H1 (cell line): ENCODE measurements at regions of chr9 and their contacts with region 1.

Region 1: DNA sequence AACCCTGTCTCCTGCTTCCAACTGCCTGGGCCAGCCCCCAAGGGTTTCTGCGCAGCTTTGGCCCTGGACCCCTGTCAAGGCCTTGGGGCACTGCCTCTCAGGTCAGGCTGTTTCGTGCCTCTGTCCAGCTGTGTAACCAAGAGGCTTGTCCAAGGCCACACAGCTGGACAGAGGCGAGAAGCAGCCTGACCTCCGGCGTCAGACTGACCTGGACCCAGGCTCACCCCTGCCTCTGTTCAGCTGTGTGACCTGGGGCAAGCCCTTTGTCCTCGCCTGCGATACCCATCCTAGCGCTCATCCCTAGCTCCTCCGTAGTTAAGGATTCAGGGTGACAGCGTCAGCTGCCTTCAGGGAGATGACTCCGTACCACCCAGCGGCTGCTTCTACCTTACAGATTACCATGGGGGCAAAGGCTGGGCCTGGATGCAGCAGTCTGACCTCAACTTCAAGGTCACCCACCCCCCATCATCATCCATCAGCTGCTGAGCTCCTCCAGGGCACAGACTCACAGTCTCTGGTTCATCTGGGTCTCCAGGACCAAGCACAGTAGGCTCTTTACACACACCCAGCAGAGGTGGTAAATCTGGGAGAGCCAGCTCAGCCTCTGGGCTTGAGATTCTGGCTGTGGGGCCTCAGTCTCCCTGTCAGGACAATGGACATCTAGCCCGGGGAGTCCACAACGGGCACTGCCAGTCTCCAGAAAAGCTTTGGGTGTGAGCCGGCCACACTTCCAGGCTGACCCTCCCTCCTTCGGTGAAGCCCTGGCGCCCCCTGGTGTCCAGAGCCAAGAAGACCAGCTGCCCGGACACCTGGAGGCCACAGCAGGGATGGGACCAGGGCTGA is 7.9 kb downstream of the AK1 start:
- DNase-seq: peak; percentile 59 to 98
- H3K4me3 ChIP-seq: no peak overlapping the region
- H3K27ac ChIP-seq: no peak overlapping the region
- H3K4me1 ChIP-seq: peaks cover 0 to 8% (median 2%) of the 10 kb centered on the region in 4 experiments; a peak in 1 of 7 replicates
- H3K27me3 ChIP-seq: no peaks in the 10 kb centered on the region; a peak in 1 of 7 replicates
- CTCF ChIP-seq: peak in 2 of 3 experiments; percentile 94 to 99; a peak in 3 of 4 replicates
- EP300 ChIP-seq: no peak
- POLR2A ChIP-seq: no peak
- RAD21 ChIP-seq: peak; percentile 96 to 97

Region 2: DNA sequence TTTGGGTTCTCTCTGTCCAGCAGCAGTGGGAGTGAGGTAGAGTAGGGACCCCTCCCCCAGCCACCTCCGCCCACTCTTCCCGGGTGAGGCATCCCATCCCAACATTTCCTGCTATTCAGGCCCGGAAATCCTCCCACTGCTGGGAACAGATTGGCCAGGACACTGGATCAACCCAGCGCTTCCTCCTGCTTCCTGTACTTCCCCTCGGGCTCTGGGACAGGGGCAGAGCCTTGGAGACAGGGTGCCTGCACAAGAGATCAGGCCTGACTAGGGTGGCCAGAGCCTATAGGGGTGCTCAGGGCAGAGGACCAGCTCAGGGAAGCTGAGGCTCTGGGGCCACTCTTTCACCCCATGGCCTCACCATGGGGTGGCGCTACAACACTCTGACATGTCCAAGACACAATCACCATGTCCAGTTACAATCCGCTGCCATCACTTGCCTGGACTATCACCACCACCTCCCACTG is 105.6 kb before region 1 on chr9:
- CTCF ChIA-PET with region 1: interaction called, 16 read pairs
- POLR2A ChIA-PET with region 1: no interaction called
- DNase-seq: peak in 1 of 2 experiments; percentile 85
- H3K4me3 ChIP-seq: 0 out of 8 replicates have a peak overlapping the region, but pooled peaks of 1 of the 4 experiments have one; percentile 0
- H3K27ac ChIP-seq: no peak overlapping the region
- H3K4me1 ChIP-seq: peaks cover 0 to 20% (median 14%) of the 10 kb centered on the region in 4 experiments; a peak in 6 of 7 replicates
- H3K27me3 ChIP-seq: no peaks in the 10 kb centered on the region
- CTCF ChIP-seq: peak; percentile 76 to 89 (median 77)
- EP300 ChIP-seq: no peak
- POLR2A ChIP-seq: no peak
- RAD21 ChIP-seq: peak; percentile 77 to 78

Region 3: GRCh38 chr9:127793093-127793708 is 76.3 kb before region 1 on chr9:
- CTCF ChIA-PET with region 1: interaction called, 28 read pairs
- POLR2A ChIA-PET with region 1: interaction called, 6 read pairs
- DNase-seq: no peak
- H3K4me3 ChIP-seq: no peak overlapping the region
- H3K27ac ChIP-seq: no peak overlapping the region
- H3K4me1 ChIP-seq: no peaks in the 10 kb centered on the region; a peak in 1 of 7 replicates
- H3K27me3 ChIP-seq: no peaks in the 10 kb centered on the region
- CTCF ChIP-seq: no peak
- EP300 ChIP-seq: no peak
- POLR2A ChIP-seq: peak in 1 of 2 experiments; percentile 45; a peak in 2 of 3 replicates
- RAD21 ChIP-seq: no peak

Region 4: DNA sequence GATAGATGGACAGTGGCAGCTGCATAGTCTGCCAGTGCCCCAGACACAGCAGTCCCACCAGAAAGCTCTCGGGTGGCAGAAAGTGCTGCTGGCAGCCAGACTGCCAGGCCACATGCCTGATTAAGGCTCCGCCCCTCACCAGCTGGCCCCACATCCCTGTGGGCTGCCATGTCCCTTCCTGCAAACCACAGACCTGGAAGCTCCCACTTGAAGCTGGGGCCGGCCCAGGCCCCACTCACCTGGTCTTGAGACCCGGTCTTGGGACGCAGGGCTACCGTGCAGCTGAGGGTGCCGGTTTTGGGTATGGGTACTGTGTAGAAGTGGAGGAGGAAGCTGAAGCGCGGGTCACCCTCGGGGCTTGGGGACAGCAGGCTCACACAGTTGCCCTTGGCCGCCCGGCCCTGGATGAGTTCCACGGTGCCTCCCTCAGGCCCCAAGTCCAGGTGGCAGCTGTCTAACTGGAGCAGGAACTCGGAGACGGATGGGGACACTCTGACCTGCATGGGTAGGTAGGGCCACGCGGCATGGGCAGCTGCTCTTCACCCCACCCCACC is 51.6 kb before region 1 on chr9:
- CTCF ChIA-PET with region 1: interaction called, 116 read pairs
- POLR2A ChIA-PET with region 1: interaction called, 4 read pairs
- DNase-seq: no peak
- H3K4me3 ChIP-seq: no peak overlapping the region
- H3K27ac ChIP-seq: no peak overlapping the region
- H3K4me1 ChIP-seq: no peaks in the 10 kb centered on the region
- H3K27me3 ChIP-seq: no peaks in the 10 kb centered on the region
- CTCF ChIP-seq: no peak
- EP300 ChIP-seq: no peak
- POLR2A ChIP-seq: no peak
- RAD21 ChIP-seq: no peak

Region 5: GRCh38 chr9:127844821-127845359 is 24.6 kb before region 1 on chr9:
- CTCF ChIA-PET with region 1: interaction called, 41 read pairs
- POLR2A ChIA-PET with region 1: interaction called, 6 read pairs
- DNase-seq: no peak
- H3K4me3 ChIP-seq: no peak overlapping the region
- H3K27ac ChIP-seq: no peak overlapping the region; the same call in 1 of the 2 replicates
- H3K4me1 ChIP-seq: peaks cover 0 to 8% (median 5%) of the 10 kb centered on the region in 4 experiments; a peak in 6 of 7 replicates
- H3K27me3 ChIP-seq: no peaks in the 10 kb centered on the region; a peak in 1 of 7 replicates
- CTCF ChIP-seq: no peak
- EP300 ChIP-seq: no peak
- POLR2A ChIP-seq: no peak
- RAD21 ChIP-seq: no peak

Region 6: DNA sequence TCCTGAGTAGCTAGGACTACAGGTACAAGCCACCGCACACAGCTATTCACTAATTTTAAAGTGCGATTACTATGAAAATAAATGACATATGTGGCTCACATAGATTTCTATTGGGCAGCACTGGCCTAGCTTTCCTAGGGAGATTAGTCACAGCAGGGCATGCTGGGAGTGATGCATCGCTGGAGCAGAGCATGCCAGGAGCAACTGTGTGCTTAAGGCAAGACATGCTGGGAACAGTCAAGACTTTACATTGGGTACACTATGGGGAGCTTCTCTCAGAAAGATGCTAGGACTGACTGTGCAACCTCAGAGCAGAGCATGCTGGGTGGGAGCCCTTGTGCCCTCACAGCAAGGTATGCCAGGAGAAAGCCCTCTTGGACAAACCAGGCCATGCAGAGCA is 20.5 kb after region 1 on chr9:
- CTCF ChIA-PET with region 1: interaction called, 15 read pairs
- POLR2A ChIA-PET with region 1: interaction called, 11 read pairs
- DNase-seq: no peak
- H3K4me3 ChIP-seq: no peak overlapping the region
- H3K27ac ChIP-seq: no peak overlapping the region
- H3K4me1 ChIP-seq: no peaks in the 10 kb centered on the region
- H3K27me3 ChIP-seq: no peaks in the 10 kb centered on the region
- CTCF ChIP-seq: no peak
- EP300 ChIP-seq: no peak
- POLR2A ChIP-seq: no peak
- RAD21 ChIP-seq: no peak

Region 7: DNA sequence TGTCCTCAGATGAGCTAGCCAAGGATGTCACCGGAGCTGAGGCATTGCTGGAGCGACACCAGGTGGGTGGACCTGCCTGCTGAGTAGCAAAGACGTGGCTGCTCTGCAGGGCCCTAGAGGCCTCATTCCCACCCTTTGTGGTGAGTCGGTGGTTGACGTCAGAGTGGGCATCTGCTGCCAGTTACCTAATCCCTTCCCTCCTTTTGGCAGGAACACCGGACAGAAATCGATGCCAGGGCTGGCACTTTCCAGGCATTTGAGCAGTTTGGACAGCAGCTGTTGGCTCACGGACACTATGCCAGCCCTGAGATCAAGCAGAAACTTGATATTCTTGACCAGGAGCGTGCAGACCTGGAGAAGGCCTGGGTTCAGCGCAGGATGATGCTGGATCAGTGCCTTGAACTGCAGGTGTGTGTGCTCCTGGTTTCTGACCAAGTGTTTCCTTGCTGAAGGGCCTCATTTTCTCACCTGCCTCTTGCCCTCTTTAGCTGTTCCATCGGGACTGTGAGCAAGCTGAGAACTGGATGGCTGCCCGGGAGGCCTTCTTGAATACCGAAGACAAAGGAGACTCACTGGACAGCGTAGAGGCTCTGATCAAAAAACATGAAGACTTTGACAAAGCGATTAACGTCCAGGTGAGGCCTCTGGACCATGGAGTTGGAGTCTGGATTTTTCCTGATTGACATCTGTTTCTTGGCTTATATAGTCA is 738.3 kb after region 1 on chr9:
- CTCF ChIA-PET with region 1: no interaction called
- POLR2A ChIA-PET with region 1: no interaction called
- DNase-seq: no peak
- H3K4me3 ChIP-seq: no peak overlapping the region
- H3K27ac ChIP-seq: no peak overlapping the region
- H3K4me1 ChIP-seq: no peaks in the 10 kb centered on the region
- H3K27me3 ChIP-seq: no peaks in the 10 kb centered on the region
- CTCF ChIP-seq: no peak
- EP300 ChIP-seq: no peak
- POLR2A ChIP-seq: no peak
- RAD21 ChIP-seq: no peak